ENCODE measurements at regions of chr17 and their contacts with region 1.

Region 1: DNA sequence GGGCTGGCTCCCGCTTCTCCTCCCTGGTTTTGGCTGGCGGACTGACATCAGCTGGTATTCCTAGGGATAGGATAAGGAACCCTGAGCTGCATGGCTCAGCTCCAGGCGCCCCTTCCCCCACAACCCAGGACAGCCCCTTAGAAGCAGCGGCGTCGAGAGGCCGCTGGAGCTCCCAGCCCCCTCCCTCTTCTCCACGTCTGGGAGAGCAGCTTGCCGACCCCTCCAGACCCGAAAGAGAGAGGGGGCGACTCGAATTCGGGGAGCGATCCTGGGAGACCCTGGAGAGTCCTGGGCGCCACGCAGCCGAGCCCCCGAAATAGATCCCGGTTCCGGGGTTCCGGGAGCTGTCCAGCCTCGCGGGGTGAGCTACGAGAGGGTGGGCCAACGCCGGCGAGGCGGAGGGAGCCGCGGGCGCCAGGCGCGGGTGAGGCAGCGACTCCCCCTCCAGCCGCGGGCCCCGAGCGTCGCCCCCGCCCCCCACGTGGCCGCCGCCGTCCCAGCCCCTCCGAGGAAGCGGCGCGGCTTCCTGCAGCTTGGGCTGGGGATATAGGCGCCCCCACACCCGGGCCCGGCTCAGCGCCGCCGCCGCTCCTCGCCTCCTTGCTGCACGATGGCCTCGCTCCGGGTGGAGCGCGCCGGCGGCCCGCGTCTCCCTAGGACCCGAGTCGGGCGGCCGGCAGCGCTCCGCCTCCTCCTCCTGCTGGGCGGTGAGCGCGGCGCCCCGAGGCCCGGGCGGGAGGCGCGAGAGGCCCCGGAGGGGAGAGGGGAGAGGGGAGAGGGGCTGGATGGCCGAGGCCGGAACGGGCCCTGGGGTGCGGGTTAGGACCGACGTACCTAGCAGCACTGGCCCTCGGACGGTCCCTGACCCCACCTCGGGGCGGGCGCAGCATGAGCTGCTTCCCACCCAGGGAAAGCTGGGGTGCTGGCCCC is at the start of gene RAMP2:
- DNase-seq: peak; percentile 36
- H3K4me3 Mint-ChIP-seq: peak within 1 kb of the TSS; percentile 58
- H3K27ac Mint-ChIP-seq: no peak within 1 kb of the TSS
- H3K4me1 Mint-ChIP-seq: peaks cover 12% of the 10 kb centered on the region
- H3K27me3 Mint-ChIP-seq: peaks cover 93% of the 10 kb centered on the region
- CTCF ChIP-seq: no peak
- total RNA-seq, gene RAMP2: not detected in 2 replicates

Region 2: DNA sequence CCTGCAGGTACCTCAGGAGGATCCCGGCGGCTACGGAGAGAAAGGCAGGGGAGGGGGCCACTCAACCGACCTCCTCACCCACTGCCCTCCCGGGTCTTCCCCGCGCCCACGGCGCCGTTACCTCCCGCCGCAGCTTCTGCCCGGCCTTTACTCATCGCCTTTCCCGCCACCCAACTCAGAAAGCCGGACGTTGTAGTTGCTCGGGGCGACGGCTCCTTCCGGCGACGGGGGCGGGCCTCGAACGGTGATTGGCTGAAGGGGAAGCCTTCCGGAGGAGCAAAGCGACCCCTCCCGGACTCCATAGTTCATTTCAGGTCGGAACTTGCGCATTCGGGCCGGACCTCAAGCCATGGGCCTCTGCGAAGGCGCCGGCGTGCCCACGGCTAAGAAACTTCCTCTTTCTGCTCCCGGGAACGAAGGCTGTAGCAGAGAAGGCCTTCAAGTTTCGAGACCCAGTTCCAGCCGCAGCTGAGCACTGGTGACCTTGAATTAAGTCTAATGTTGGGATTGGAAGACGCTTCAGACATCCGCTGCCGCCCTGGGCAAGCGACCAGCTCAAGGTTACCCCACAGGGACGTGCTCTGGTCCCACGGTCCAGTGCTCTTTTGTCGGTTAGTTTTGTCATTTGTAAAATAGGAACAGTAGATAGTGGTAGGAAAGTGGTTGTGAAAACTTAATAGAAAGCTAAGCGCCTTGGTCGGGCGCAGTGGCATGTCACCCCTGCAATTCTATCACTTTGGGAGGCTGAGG is 183.2 kb before region 1 on chr17 and contains the start of gene PSMC3IP:
- CTCF ChIA-PET with region 1: interaction called, 59 read pairs
- intact Hi-C with region 1: loop called (anchors 1 kb)
- DNase-seq: peak; percentile 98
- H3K4me3 Mint-ChIP-seq: peak within 1 kb of the TSS; percentile 82
- H3K27ac Mint-ChIP-seq: peak within 1 kb of the TSS; percentile 75
- H3K4me1 Mint-ChIP-seq: peaks cover 46% of the 10 kb centered on the region
- H3K27me3 Mint-ChIP-seq: no peaks in the 10 kb centered on the region
- CTCF ChIP-seq: peak; percentile 54
- total RNA-seq, gene PSMC3IP: 31.8 and 32.4 TPM in 2 replicates

Region 3: DNA sequence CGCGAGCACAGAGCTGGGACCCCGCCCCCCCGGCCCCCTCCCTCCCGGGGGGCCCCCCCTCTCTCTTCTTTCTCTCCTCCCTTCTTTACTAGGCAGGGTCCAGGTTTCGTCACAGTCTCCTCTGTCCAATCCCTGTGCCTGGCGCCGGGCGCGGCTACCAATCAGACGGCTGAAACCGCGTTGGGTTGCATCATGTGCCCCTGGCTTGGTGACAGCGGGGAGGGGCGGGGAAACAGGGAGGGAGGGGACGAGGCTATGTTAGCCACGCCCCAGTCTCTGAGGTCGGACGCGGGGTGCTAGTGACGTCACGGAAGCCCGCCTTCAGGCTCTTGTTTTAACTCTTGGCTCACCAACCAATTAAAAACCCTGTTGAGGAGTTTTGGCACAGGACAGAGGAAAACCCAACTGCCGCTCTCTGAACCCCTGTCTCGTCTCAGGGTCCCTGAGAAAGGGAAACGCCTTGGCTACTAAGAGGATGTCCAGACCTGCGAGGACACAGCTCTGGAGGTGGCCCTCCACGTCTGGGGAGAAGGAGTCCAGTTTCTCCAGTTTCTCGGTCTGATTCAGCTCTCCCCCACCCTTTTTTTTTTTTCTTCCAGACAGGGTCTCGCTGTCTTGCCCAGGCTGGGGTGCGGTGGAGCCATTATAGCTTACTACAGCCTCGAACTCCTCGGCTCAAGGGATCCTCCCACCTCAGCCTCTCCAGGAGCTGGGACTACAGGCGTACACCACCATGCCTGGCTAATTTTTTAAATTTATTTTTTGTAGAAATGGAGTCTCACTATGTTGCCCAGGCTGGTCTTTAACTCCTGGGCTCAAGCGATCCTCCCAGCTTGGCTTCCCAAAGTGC is 83.7 kb before region 1 on chr17:
- CTCF ChIA-PET with region 1: interaction called, 5 read pairs
- intact Hi-C with region 1: loop called (anchors 10 kb)
- DNase-seq: peak; percentile 100
- H3K4me3 Mint-ChIP-seq: peak overlapping the region; percentile 93
- H3K27ac Mint-ChIP-seq: peak overlapping the region; percentile 94
- H3K4me1 Mint-ChIP-seq: peaks cover 48% of the 10 kb centered on the region
- H3K27me3 Mint-ChIP-seq: peaks cover 12% of the 10 kb centered on the region
- CTCF ChIP-seq: no peak

Region 4: GRCh38 chr17:42691021-42691545 is 69.8 kb before region 1 on chr17:
- CTCF ChIA-PET with region 1: no interaction called
- intact Hi-C with region 1: no loop called
- DNase-seq: no peak
- H3K4me3 Mint-ChIP-seq: no peak overlapping the region
- H3K27ac Mint-ChIP-seq: no peak overlapping the region
- H3K4me1 Mint-ChIP-seq: no peaks in the 10 kb centered on the region
- H3K27me3 Mint-ChIP-seq: peaks cover 8% of the 10 kb centered on the region
- CTCF ChIP-seq: no peak

Region 5: GRCh38 chr17:42720996-42721583 is 39.8 kb before region 1 on chr17:
- CTCF ChIA-PET with region 1: interaction called, 9 read pairs
- intact Hi-C with region 1: loop called (anchors 1 kb)
- DNase-seq: peak; percentile 57
- H3K4me3 Mint-ChIP-seq: no peak overlapping the region
- H3K27ac Mint-ChIP-seq: no peak overlapping the region
- H3K4me1 Mint-ChIP-seq: no peaks in the 10 kb centered on the region
- H3K27me3 Mint-ChIP-seq: no peaks in the 10 kb centered on the region
- CTCF ChIP-seq: peak; percentile 61

Region 6: DNA sequence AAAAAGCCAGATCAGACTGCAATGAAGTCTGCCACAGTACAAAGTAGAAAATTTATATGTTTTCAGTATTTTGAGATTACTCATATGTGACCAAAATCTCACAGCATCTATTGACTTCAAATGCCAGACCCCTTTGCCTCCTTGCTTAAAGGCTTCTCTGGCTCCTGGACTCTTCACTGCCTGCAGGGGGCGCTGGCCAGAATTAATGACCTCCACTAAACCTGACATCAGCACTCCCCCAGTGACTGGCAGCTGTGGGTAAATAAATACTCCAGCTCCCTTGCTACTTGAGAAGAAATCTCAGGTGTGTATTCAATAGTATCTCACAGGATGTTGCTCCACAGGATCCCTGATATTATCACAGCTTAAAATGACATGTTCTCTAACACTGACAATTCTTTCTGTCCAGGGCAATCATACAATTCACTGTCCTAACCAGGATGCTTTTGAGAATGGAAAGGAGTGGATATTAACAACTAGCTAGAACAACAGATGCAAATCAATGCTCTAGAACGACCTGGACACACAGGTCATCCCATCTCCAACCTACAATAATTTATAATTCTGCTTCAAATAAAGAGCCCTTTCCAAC is 59.1 kb after region 1 on chr17:
- CTCF ChIA-PET with region 1: interaction called, 12 read pairs
- intact Hi-C with region 1: no loop called
- DNase-seq: peak; percentile 83
- H3K4me3 Mint-ChIP-seq: no peak overlapping the region
- H3K27ac Mint-ChIP-seq: no peak overlapping the region
- H3K4me1 Mint-ChIP-seq: peaks cover 6% of the 10 kb centered on the region
- H3K27me3 Mint-ChIP-seq: no peaks in the 10 kb centered on the region
- CTCF ChIP-seq: peak; percentile 84

Region 7: DNA sequence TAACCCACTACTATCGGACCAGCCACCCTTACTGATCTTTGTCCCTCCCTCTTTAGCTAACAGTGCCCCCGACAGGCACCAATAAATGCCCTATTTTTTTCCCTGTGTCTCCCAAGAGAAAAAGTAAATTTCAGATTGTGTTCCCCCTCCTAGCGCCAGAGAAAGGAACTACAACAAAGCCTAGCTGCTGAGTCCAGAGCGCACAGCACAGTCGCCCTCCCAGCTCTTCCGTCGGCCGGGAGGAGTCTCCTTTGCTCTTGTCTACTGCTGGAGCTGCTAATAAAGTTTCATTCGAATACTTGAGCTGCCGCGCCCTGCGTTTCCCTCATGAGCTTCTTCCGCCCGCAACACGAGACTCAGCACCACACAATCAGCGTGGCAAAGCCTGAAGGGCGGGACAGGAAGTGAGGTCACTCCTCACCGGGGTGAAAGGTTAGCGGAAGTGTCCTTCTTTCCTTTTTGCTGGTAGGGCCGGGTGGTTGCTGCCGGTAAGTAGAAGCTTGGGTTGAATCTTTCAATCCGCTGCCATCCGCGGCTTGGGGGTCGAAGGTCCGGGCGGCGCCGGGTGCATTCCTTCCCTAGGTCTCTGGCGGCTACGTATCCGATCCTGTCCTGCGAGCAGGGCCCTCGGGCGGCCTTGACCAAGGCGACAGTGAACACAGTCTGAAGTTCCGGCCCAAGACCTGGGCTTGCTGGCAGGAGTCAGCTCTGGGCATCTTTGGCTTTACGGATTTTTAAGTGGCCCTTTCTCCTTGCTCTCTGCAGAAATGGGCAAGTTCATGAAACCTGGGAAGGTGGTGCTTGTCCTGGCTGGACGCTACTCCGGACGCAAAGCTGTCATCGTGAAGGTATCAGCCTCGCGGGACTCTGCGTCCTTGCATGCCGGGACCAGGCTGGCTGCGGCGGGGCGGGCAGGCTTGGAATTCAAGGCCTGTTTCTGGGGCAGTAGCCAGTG is 237.3 kb after region 1 on chr17 and contains the start of gene RPL27:
- CTCF ChIA-PET with region 1: no interaction called
- intact Hi-C with region 1: no loop called
- DNase-seq: peak; percentile 99
- H3K4me3 Mint-ChIP-seq: peak within 1 kb of the TSS; percentile 99
- H3K27ac Mint-ChIP-seq: peak within 1 kb of the TSS; percentile 100
- H3K4me1 Mint-ChIP-seq: peaks cover 19% of the 10 kb centered on the region
- H3K27me3 Mint-ChIP-seq: no peaks in the 10 kb centered on the region
- CTCF ChIP-seq: peak; percentile 96
- total RNA-seq, gene RPL27: 1,193 and 1,292 TPM in 2 replicates